GM12878 (cell line): ENCODE measurements at regions of chr6 and their contacts with region 1.

Region 1: DNA sequence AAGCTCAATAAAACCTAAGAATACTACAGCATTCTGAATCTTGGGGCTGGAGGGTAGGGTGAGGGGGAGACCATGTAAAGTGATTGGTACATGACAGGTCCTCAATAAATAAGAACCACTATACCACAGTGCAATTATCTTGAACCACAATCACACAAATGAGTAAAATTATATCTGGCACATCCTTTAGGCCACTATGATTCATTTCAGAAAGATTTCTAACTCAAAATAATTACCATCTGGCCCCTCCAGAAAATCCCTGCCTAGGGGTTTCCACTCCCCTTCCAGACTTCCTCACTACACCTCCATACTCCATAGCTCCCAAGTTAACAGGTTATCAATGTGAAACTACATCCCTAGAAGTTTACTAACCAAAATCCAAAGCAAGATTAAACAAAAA is 19.7 kb downstream of the AKIRIN2 start:
- DNase-seq: no peak
- ATAC-seq: peak; percentile 82
- H3K4me3 ChIP-seq: no peak overlapping the region
- H3K27ac ChIP-seq: peak overlapping the region; percentile 70
- H3K4me1 ChIP-seq: peaks cover 20% of the 10 kb centered on the region
- H3K27me3 ChIP-seq: no peaks in the 10 kb centered on the region
- CTCF ChIP-seq: no peak
- EP300 ChIP-seq: peak in 1 of 2 experiments; percentile 69; a peak in 1 of 4 replicates
- POLR2A ChIP-seq: no peak
- RAD21 ChIP-seq: no peak

Region 2: DNA sequence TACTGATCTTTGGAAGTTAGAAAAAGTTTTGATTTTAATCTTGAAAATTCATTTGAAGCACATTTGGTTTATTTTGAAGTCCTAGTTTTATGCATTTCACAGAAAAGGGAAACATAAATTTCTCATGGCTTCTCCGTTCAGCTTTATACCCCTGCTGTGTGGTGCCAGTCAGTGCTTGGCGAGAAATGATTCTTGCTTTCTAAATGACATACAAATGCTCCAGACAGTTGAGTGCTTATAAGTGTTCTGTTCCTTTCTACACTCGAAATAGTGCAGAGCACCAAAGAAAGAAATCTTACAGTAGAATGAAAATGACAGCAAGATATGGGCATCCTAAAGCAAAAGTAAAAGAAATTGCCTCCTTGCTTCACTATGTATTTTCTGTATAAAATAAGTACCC is 535.9 kb before region 1 on chr6:
- CTCF ChIA-PET with region 1: no interaction called
- POLR2A ChIA-PET with region 1: no interaction called
- RAD21 ChIA-PET with region 1: no interaction called
- SMC1A ChIA-PET with region 1: no interaction called
- in situ Hi-C with region 1: no loop called
- intact Hi-C with region 1: no loop called
- DNase-seq: no peak
- ATAC-seq: peak; percentile 87
- H3K4me3 ChIP-seq: peak overlapping the region; percentile 45; the same call in 1 of the 2 replicates
- H3K27ac ChIP-seq: peak overlapping the region; percentile 41; the same call in 1 of the 2 replicates
- H3K4me1 ChIP-seq: peaks cover 1% of the 10 kb centered on the region; the same call in 1 of the 2 replicates
- H3K27me3 ChIP-seq: no peaks in the 10 kb centered on the region
- CTCF ChIP-seq: no peak
- EP300 ChIP-seq: no peak
- POLR2A ChIP-seq: no peak
- RAD21 ChIP-seq: no peak

Region 3: DNA sequence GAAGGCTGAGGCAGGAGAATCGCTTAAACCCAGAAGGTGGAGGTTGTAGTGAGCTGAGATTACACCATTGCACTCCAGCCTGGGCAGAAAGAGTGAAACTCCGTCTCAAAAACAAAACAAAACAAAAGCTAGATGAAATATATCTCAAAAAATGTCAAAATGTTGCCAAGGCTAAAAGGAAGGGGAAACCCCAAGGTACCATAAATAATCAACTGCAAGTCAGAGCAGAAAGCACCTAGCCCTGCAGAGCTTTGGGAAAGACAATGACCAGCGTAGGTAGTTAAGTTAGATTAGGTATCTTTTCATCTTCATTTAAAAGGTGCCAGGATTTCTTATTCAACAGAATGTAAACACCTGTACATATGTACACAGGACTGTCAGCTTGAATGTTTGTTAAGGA is 13.3 kb before region 1 on chr6:
- CTCF ChIA-PET with region 1: interaction called, 4 read pairs
- POLR2A ChIA-PET with region 1: interaction called, 6 read pairs
- RAD21 ChIA-PET with region 1: interaction called, 4 read pairs
- SMC1A ChIA-PET with region 1: interaction called, 24 read pairs
- in situ Hi-C with region 1: no loop called
- intact Hi-C with region 1: no loop called
- DNase-seq: no peak
- ATAC-seq: peak; percentile 71
- H3K4me3 ChIP-seq: no peak overlapping the region
- H3K27ac ChIP-seq: no peak overlapping the region
- H3K4me1 ChIP-seq: peaks cover 6% of the 10 kb centered on the region; the same call in 1 of the 2 replicates
- H3K27me3 ChIP-seq: no peaks in the 10 kb centered on the region
- CTCF ChIP-seq: no peak
- EP300 ChIP-seq: no peak
- POLR2A ChIP-seq: no peak
- RAD21 ChIP-seq: no peak

Region 4: DNA sequence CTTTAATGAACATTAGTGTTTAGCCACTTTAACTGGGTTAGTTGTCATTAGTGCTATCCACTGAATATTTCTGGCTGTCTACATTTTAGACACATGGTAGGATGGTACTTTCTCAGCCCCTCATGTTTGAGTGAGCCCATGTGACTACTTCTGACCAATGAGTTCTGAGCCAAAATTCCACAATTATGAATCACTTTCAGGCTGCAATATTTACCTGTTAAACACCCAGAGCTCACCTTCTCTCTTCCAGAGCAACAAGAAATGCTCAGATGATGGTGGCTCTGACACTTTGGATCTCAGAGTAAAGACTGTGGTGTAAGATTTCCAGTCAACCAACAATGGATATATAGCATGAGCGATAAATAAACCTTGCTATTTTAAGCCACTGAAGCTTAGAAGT is 390.2 kb after region 1 on chr6:
- CTCF ChIA-PET with region 1: no interaction called
- POLR2A ChIA-PET with region 1: no interaction called
- RAD21 ChIA-PET with region 1: no interaction called
- SMC1A ChIA-PET with region 1: no interaction called
- in situ Hi-C with region 1: no loop called
- intact Hi-C with region 1: no loop called
- DNase-seq: no peak
- ATAC-seq: no peak
- H3K4me3 ChIP-seq: no peak overlapping the region
- H3K27ac ChIP-seq: no peak overlapping the region
- H3K4me1 ChIP-seq: no peaks in the 10 kb centered on the region
- H3K27me3 ChIP-seq: no peaks in the 10 kb centered on the region; a peak in 1 of 4 replicates
- CTCF ChIP-seq: no peak
- EP300 ChIP-seq: no peak
- POLR2A ChIP-seq: no peak
- RAD21 ChIP-seq: no peak

Region 5: DNA sequence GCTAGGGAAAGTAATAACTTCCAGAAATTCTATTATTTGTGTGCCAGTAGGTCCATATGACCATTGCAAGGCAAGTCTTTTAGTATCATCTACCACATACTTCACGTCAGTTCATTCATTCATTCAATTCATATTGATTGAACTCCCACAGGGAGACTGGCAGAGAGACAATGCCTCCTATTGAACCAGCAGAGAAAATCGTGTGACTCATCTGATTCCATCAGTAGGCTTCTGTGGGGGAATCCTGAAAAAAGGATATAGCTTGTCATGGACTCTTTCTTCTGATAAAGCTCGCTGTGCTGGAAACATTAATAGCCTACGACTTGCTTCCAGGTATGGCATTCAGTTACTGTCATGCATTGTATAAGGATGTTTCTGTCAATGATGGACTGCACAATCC is 529.1 kb after region 1 on chr6:
- CTCF ChIA-PET with region 1: no interaction called
- POLR2A ChIA-PET with region 1: no interaction called
- RAD21 ChIA-PET with region 1: no interaction called
- SMC1A ChIA-PET with region 1: no interaction called
- in situ Hi-C with region 1: no loop called
- intact Hi-C with region 1: no loop called
- DNase-seq: no peak
- ATAC-seq: no peak
- H3K4me3 ChIP-seq: no peak overlapping the region
- H3K27ac ChIP-seq: no peak overlapping the region
- H3K4me1 ChIP-seq: no peaks in the 10 kb centered on the region
- H3K27me3 ChIP-seq: no peaks in the 10 kb centered on the region
- CTCF ChIP-seq: no peak
- EP300 ChIP-seq: no peak
- POLR2A ChIP-seq: no peak
- RAD21 ChIP-seq: no peak

Region 6: GRCh38 chr6:88449770-88450169 is 767.5 kb after region 1 on chr6:
- CTCF ChIA-PET with region 1: no interaction called
- POLR2A ChIA-PET with region 1: no interaction called
- RAD21 ChIA-PET with region 1: no interaction called
- SMC1A ChIA-PET with region 1: no interaction called
- in situ Hi-C with region 1: no loop called
- intact Hi-C with region 1: no loop called
- DNase-seq: no peak
- ATAC-seq: no peak
- H3K4me3 ChIP-seq: no peak overlapping the region
- H3K27ac ChIP-seq: no peak overlapping the region
- H3K4me1 ChIP-seq: no peaks in the 10 kb centered on the region
- H3K27me3 ChIP-seq: no peaks in the 10 kb centered on the region
- CTCF ChIP-seq: no peak
- EP300 ChIP-seq: no peak
- POLR2A ChIP-seq: no peak
- RAD21 ChIP-seq: no peak